Naive thymus-derived CD8-positive, alpha-beta T cell (primary cell): ENCODE measurements at regions of chr2 and their contacts with region 1.

Region 1: GRCh38 chr2:42132966-42133641 is 36.0 kb upstream of the EML4 start:
- DNase-seq: peak; percentile 67 to 94 (median 85)
- ATAC-seq: peak; percentile 87 to 91
- H3K4me3 Mint-ChIP-seq: peak overlapping the region; percentile 62 to 84 (median 75)
- H3K27ac Mint-ChIP-seq: peak overlapping the region; percentile 90 to 98 (median 96)
- H3K4me1 Mint-ChIP-seq: peaks cover 46 to 96% (median 91%) of the 10 kb centered on the region in 4 donors
- H3K27me3 Mint-ChIP-seq: no peaks in the 10 kb centered on the region

Region 2: GRCh38 chr2:42084231-42084671 is 48.9 kb before region 1 on chr2:
- POLR2A ChIA-PET with region 1: no interaction called
- DNase-seq: no peak
- ATAC-seq: no peak
- H3K4me3 Mint-ChIP-seq: no peak overlapping the region
- H3K27ac Mint-ChIP-seq: no peak overlapping the region
- H3K4me1 Mint-ChIP-seq: peaks cover 4 to 9% (median 6%) of the 10 kb centered on the region in 4 donors
- H3K27me3 Mint-ChIP-seq: peaks cover 3 to 14% (median 8%) of the 10 kb centered on the region in 5 donors

Region 3: GRCh38 chr2:42095923-42096408 is 37.1 kb before region 1 on chr2:
- POLR2A ChIA-PET with region 1: interaction called, 26 read pairs
- DNase-seq: peak; percentile 58 to 88 (median 72)
- ATAC-seq: peak; percentile 58 to 68
- H3K4me3 Mint-ChIP-seq: no peak overlapping the region
- H3K27ac Mint-ChIP-seq: peak overlapping the region in 6 of 10 donors; percentile 11 to 54 (median 17)
- H3K4me1 Mint-ChIP-seq: peaks cover 22 to 62% (median 48%) of the 10 kb centered on the region in 4 donors
- H3K27me3 Mint-ChIP-seq: peaks cover 0 to 5% (median 0%) of the 10 kb centered on the region in 5 donors

Region 4: GRCh38 chr2:42169100-42169873 is 36.2 kb after region 1 on chr2 and contains the start of gene EML4:
- POLR2A ChIA-PET with region 1: interaction called, 28 read pairs
- DNase-seq: peak; percentile 79 to 95 (median 90)
- ATAC-seq: peak; percentile 87
- H3K4me3 Mint-ChIP-seq: peak within 1 kb of the TSS in 2 of 10 donors; percentile 53 to 70
- H3K27ac Mint-ChIP-seq: peak within 1 kb of the TSS in 2 of 10 donors; percentile 91
- H3K4me1 Mint-ChIP-seq: peaks cover 7 to 24% (median 15%) of the 10 kb centered on the region in 4 donors
- H3K27me3 Mint-ChIP-seq: no peaks in the 10 kb centered on the region
- polyA plus RNA-seq, gene EML4: 37.8 to 48.1 (median 44.7) TPM

Region 5: GRCh38 chr2:42256505-42256904 is 123.4 kb after region 1 on chr2:
- POLR2A ChIA-PET with region 1: no interaction called
- DNase-seq: peak in 2 of 10 donors; percentile 5 to 10
- ATAC-seq: peak in 1 of 2 donors; percentile 27
- H3K4me3 Mint-ChIP-seq: peak overlapping the region in 7 of 10 donors; percentile 9 to 57 (median 29)
- H3K27ac Mint-ChIP-seq: peak overlapping the region in 8 of 10 donors; percentile 2 to 85 (median 44)
- H3K4me1 Mint-ChIP-seq: peaks cover 16 to 55% (median 45%) of the 10 kb centered on the region in 4 donors
- H3K27me3 Mint-ChIP-seq: no peaks in the 10 kb centered on the region

Region 6: GRCh38 chr2:42286268-42286946 is 153.3 kb after region 1 on chr2:
- POLR2A ChIA-PET with region 1: no interaction called
- DNase-seq: no peak
- ATAC-seq: no peak
- H3K4me3 Mint-ChIP-seq: no peak overlapping the region
- H3K27ac Mint-ChIP-seq: peak overlapping the region in 9 of 10 donors; percentile 41 to 84 (median 67)
- H3K4me1 Mint-ChIP-seq: peaks cover 11 to 20% (median 14%) of the 10 kb centered on the region in 4 donors
- H3K27me3 Mint-ChIP-seq: no peaks in the 10 kb centered on the region